CD14-positive monocyte (primary cell): ENCODE measurements at regions of chr10 and their contacts with region 1.

Region 1: DNA sequence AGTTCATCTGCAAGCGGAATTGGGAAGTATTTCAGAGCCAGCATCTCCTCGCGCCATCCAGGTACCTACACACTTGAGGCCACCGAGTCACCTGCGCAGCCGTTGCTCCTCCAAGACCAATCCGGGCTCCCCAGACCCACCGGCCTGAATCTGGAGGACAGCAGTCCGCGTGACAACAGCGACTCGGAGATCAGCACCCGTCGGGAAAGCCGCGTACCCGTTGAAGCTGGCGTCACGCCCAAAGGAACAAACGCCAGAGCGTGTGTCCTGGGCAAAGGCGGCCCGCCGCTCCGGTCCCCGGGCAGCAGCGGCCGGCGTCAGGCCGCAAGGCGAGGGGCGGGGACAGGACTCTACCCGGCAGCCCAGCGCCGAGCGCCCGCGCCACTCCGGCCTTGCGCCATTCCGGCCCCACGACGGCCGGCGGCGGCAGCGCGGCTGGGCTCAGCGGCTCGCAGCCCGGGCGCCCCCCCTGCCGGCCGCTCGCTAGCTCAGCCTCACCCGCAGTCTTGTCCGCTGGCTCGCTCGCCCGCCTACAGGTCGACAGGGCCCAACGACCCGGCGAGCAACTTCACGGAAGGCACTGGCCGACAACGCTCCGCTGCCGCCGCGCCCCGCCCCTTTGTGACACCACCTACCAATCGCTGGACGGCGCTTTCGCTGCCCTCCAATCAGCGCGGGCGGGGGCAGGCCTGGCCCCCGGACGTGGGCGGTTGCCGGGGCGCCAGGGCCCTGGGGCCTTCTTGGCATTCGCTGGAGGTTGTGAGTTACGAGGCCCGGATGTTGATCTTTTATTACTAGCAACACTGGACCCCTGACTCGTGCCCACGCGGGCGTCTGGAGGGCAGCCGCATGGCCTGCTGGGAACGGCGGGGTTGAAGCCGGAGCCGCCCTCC is at the start of gene ZFAND4:
- DNase-seq: peak; percentile 97 to 98 (median 98)
- H3K4me3 ChIP-seq: peak within 1 kb of the TSS; percentile 42 to 86 (median 76)
- H3K4me3 Mint-ChIP-seq: peak within 1 kb of the TSS; percentile 87 to 93
- H3K27ac ChIP-seq: peak within 1 kb of the TSS; percentile 88 to 93
- H3K27ac Mint-ChIP-seq: peak within 1 kb of the TSS; percentile 83 to 94 (median 93)
- H3K4me1 ChIP-seq: peaks cover 16 to 19% of the 10 kb centered on the region in 2 donors
- H3K4me1 Mint-ChIP-seq: peaks cover 20% of the 10 kb centered on the region
- H3K27me3 ChIP-seq: no peaks in the 10 kb centered on the region
- H3K27me3 Mint-ChIP-seq: peaks cover 0 to 2% (median 0%) of the 10 kb centered on the region in 3 donors
- CTCF ChIP-seq: peak; percentile 75
- polyA plus RNA-seq, gene ZFAND4: 4.4 to 5.9 (median 5.1) TPM

Region 2: GRCh38 chr10:45249978-45250693 is 422.3 kb before region 1 on chr10:
- intact Hi-C with region 1: loop called in 1 of 2 experiments (anchors 5 kb)
- DNase-seq: peak; percentile 41 to 86 (median 53)
- H3K4me3 ChIP-seq: peak overlapping the region in 1 of 3 experiments; percentile 42
- H3K4me3 Mint-ChIP-seq: peak overlapping the region; percentile 48 to 77
- H3K27ac ChIP-seq: peak overlapping the region in 1 of 2 donors; percentile 36
- H3K27ac Mint-ChIP-seq: peak overlapping the region in 5 of 7 donors; percentile 37 to 75 (median 51)
- H3K4me1 ChIP-seq: peaks cover 13 to 14% of the 10 kb centered on the region in 2 donors
- H3K4me1 Mint-ChIP-seq: peaks cover 17% of the 10 kb centered on the region
- H3K27me3 ChIP-seq: no peaks in the 10 kb centered on the region
- H3K27me3 Mint-ChIP-seq: peaks cover 2 to 9% (median 6%) of the 10 kb centered on the region in 3 donors
- CTCF ChIP-seq: peak; percentile 81

Region 3: GRCh38 chr10:45594276-45595106 is 77.9 kb before region 1 on chr10:
- intact Hi-C with region 1: no loop called
- DNase-seq: peak; percentile 82 to 90 (median 89)
- H3K4me3 ChIP-seq: peak overlapping the region; percentile 72 to 95 (median 80)
- H3K4me3 Mint-ChIP-seq: peak overlapping the region; percentile 83 to 92
- H3K27ac ChIP-seq: peak overlapping the region in 1 of 2 donors; percentile 43
- H3K27ac Mint-ChIP-seq: peak overlapping the region in 6 of 7 donors; percentile 41 to 80 (median 71)
- H3K4me1 ChIP-seq: peaks cover 21 to 28% of the 10 kb centered on the region in 2 donors
- H3K4me1 Mint-ChIP-seq: peaks cover 30% of the 10 kb centered on the region
- H3K27me3 ChIP-seq: peaks cover 0 to under 1% of the 10 kb centered on the region in 2 donors
- H3K27me3 Mint-ChIP-seq: peaks cover 3 to 15% (median 11%) of the 10 kb centered on the region in 3 donors
- CTCF ChIP-seq: no peak